ENCODE measurements at regions of chr9 and their contacts with region 1.

Region 1: DNA sequence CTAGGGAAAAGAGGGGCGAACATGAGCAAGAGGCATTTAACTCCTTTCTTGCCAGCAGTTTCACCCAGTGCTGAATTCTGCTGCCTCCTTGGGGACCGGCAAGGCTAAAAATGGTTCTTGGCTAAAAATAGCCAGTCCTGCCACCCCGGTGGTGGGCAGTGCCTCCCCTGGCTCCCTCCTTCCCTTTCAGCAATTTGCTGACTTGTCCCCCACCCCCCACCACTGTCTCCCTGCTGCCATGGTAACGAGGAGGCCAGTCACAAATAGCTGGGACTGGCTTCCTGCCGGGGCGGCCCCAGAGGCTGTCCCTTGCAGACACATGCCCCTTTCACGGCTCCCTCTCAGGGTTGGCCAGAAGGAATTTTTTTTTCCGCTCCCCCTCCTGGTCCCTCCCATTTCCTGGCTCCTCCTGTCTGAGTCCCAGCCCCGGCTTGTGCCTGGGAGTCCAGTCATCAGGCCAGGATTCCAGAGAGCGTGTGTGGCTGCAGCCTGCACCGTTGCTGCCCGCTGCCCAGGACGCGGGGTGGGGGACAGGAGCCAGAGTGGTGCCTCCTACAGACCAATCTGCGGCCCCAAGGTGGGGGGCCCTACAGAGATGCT is 130.3 kb downstream of the RGS3 start:
- DNase-seq: no peak
- H3K4me3 ChIP-seq: peak overlapping the region; percentile 49 to 71
- H3K27ac ChIP-seq: peak overlapping the region; percentile 84
- H3K4me1 ChIP-seq: peaks cover 54% of the 10 kb centered on the region
- H3K27me3 ChIP-seq: no peaks in the 10 kb centered on the region
- CTCF ChIP-seq: no peak
- POLR2A ChIP-seq: peak in 1 of 2 donors; percentile 85

Region 2: DNA sequence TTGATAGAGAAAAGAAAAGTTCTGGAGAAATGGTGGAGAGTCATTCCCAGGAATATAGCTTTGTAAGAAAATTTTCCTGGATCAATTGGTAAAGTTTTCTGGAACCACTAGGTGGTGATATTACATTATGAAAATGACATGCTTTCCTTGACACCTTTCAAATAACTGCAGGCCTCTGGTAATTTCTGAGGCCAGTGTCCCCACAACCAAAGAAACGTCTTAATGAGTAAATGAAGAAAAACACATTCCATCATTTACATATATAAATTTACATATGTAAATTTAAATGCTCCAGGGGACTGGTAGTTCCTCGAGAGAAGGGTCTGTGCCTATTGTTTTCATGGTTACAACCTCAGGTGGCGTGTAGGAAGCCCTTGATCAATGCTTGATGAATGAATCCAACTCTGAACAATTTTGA is 147.4 kb before region 1 on chr9:
- intact Hi-C with region 1: loop called (anchors 2 kb)
- DNase-seq: no peak
- H3K4me3 ChIP-seq: no peak overlapping the region
- H3K27ac ChIP-seq: no peak overlapping the region
- H3K4me1 ChIP-seq: no peaks in the 10 kb centered on the region
- H3K27me3 ChIP-seq: no peaks in the 10 kb centered on the region
- CTCF ChIP-seq: peak; percentile 67 to 77 (median 74)
- POLR2A ChIP-seq: no peak

Region 3: GRCh38 chr9:113657703-113658544 is 64.1 kb after region 1 on chr9:
- intact Hi-C with region 1: loop called (anchors 2 kb)
- DNase-seq: no peak
- H3K4me3 ChIP-seq: no peak overlapping the region
- H3K27ac ChIP-seq: no peak overlapping the region
- H3K4me1 ChIP-seq: peaks cover 17% of the 10 kb centered on the region
- H3K27me3 ChIP-seq: no peaks in the 10 kb centered on the region
- CTCF ChIP-seq: peak; percentile 88 to 94 (median 92)
- POLR2A ChIP-seq: no peak